T-cell (primary cell): ENCODE measurements at regions of chr22 and their contacts with region 1.

Region 1: GRCh38 chr22:26642465-26643417 is 14.6 kb upstream of the MIAT start:
- DNase-seq: peak; percentile 32 to 79 (median 61)
- ATAC-seq: peak; percentile 77 to 83 (median 81)
- H3K4me3 ChIP-seq: no peak overlapping the region
- H3K4me3 Mint-ChIP-seq: peak overlapping the region; percentile 47 to 82 (median 53)
- H3K27ac ChIP-seq: peak overlapping the region; percentile 84
- H3K27ac Mint-ChIP-seq: peak overlapping the region; percentile 95 to 98
- H3K4me1 ChIP-seq: peaks cover 32 to 66% of the 10 kb centered on the region in 2 experiments
- H3K4me1 Mint-ChIP-seq: peaks cover 63 to 72% (median 66%) of the 10 kb centered on the region in 3 donors
- H3K27me3 ChIP-seq: no peaks in the 10 kb centered on the region
- H3K27me3 Mint-ChIP-seq: peaks cover 0 to 4% of the 10 kb centered on the region in 2 donors

Region 2: DNA sequence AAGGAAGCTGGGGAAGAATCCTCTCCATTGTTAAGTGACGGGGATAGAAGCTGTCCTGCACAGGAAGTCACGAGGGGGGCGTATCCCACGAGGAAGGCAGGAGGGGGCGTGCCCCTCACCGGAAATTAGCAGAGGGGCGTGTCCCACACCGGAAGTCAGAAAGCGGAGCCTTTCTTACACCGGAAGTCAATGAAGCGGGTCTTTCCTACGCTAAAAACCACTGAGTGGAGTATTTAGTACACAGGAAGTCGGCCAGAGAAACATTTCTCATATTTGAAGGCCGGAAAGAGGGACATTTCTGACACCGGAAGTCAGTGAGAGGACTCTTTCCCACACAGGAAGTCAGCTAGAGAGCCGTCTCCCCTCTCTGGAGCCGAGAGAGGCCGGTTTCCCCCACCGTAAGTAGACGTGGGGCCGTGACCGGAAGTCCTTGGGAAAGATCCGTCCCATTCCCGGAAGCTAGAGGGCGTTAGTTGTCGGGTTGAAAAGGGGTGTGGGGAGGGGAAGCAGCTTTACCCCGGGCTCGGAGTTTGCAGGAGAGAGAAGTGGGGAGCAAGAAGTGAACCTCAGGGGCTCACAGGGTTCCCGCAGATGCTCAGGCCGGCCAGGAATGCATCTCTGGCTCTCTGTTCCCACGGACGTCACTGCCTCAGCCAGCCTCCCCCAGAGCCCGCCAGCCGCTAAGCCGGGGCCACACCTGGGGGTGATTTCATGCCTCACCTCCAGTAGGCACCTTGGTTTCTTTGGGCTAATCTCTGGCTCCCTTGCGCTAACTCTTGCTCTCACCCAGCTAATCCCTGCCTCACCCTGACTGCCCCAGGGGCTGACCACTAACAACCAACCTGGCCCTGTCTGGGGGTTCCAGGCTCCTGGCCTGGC is 30.1 kb after region 1 on chr22:
- CTCF ChIA-PET with region 1: interaction called, 8 to 10 read pairs
- POLR2A ChIA-PET with region 1: no interaction called
- DNase-seq: peak; percentile 86 to 95 (median 90)
- ATAC-seq: peak; percentile 74 to 79 (median 78)
- H3K4me3 ChIP-seq: peak overlapping the region; percentile 87 to 92
- H3K4me3 Mint-ChIP-seq: peak overlapping the region; percentile 93 to 94 (median 94)
- H3K27ac ChIP-seq: peak overlapping the region; percentile 93
- H3K27ac Mint-ChIP-seq: peak overlapping the region; percentile 97 to 99
- H3K4me1 ChIP-seq: peaks cover 42 to 97% of the 10 kb centered on the region in 2 experiments
- H3K4me1 Mint-ChIP-seq: peaks cover 76 to 88% (median 88%) of the 10 kb centered on the region in 3 donors
- H3K27me3 ChIP-seq: no peaks in the 10 kb centered on the region
- H3K27me3 Mint-ChIP-seq: no peaks in the 10 kb centered on the region